Mammary epithelial cell (primary cell): ENCODE measurements at regions of chr16 and their contacts with region 1.

Region 1: GRCh38 chr16:4882633-4883285 is 35.5 kb downstream of the UBN1 start:
- DNase-seq: peak; percentile 93
- H3K4me3 ChIP-seq: no peak overlapping the region
- H3K27ac ChIP-seq: no peak overlapping the region
- H3K4me1 ChIP-seq: peaks cover 14% of the 10 kb centered on the region
- H3K27me3 ChIP-seq: no peaks in the 10 kb centered on the region
- CTCF ChIP-seq: no peak

Region 2: DNA sequence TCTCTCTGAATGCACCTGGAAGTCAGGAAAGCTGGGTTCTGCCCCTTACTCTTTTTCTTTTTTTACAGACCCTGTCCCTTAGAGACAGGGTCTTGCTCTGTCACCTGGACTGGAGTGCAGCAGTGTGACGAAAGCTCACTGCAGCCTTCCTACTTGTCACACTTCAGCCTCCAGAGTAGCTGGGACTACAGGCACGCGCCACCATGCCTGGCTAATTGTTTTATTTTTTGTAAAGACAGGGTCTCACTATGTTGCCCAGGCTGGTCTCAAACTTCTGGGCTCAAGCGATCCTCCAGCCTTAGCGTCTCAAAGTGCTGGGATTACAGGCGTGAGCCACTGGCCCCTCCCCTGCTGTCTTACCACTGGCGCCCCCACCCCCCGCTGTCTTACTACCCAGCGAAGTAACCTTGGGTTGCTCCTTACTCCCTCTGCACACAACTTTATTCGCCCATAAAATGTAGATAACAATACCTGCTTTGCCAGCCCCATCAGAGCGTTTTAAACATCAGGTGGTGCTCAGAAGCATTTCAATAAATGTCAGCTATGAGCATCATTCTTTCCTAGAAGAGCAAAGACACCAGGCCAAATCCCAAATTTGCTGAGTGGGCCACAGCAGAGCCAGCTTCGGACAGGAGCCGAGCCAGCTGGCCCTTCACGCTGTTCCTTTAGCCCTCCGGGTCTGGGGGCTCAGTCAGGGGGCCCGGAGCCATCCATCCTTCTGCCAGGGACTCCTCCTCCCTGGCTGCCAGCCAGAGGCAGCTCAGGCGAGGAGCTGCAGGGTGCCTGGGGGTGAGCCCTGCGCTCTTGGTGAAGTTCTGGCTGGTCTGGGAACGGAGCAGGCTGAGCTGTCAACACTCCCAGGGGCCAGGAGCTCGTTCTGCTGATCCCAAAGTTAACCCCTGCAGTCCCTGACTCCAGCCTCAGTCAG is 665.3 kb before region 1 on chr16:
- CTCF ChIA-PET with region 1: no interaction called
- dilution Hi-C with region 1: no loop called
- in situ Hi-C with region 1: no loop called
- intact Hi-C with region 1: no loop called
- DNase-seq: no peak
- H3K4me3 ChIP-seq: no peak overlapping the region
- H3K27ac ChIP-seq: no peak overlapping the region
- H3K4me1 ChIP-seq: peaks cover 22% of the 10 kb centered on the region
- H3K27me3 ChIP-seq: no peaks in the 10 kb centered on the region
- CTCF ChIP-seq: no peak

Region 3: GRCh38 chr16:4574919-4575705 is 307.6 kb before region 1 on chr16:
- CTCF ChIA-PET with region 1: no interaction called
- dilution Hi-C with region 1: no loop called
- in situ Hi-C with region 1: no loop called
- intact Hi-C with region 1: no loop called
- DNase-seq: no peak
- H3K4me3 ChIP-seq: no peak overlapping the region
- H3K27ac ChIP-seq: no peak overlapping the region
- H3K4me1 ChIP-seq: no peaks in the 10 kb centered on the region
- H3K27me3 ChIP-seq: no peaks in the 10 kb centered on the region
- CTCF ChIP-seq: no peak

Region 4: DNA sequence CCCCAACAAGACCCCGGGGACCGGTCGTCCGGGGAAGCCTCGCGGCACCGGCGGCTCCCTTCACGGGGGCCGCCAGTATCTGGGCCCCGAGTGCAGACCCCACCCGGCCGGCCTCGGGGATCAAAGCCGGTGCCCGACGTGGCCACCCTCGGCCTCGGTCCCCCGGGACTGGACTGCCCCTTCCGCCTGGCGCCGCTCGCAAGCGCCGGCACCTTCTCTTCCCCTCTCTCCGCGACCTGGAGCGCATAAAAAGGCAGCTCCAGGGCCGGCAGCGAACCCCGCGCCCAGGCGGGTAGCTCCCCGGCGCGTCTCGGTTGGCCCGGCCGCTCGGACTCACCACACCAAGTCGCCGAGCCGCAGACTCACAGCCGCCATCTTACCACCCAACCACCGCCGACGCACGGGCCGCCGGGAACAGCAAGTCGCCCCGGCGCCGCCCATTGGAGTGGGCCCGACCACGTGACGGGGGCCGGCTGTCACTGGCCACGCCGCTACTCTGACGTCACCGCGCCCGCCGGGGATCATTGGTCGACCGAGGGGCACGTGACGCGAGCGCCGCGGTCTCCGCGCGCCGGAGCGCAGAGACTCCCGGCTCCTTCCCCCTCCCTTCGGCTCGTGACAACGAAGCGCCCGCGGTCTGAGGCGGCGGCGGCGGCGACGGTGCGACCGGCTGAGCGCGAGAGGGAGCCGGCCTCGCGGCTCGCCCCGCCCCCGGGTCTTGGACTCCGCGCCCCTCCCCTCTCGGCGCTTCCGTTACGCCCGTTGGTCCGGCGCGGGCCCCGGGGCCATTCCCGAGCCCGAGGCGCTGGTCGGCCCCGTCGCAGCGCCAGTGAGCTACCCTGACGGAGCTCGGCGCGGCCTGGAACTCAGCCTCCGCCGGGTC is 35.6 kb before region 1 on chr16 and contains the starts of genes GLYR1 and UBN1:
- CTCF ChIA-PET with region 1: no interaction called
- dilution Hi-C with region 1: no loop called
- in situ Hi-C with region 1: no loop called
- intact Hi-C with region 1: loop called (anchors 2 kb)
- DNase-seq: peak; percentile 97
- H3K4me3 ChIP-seq: peak within 1 kb of the TSS; percentile 65 to 93 (median 89)
- H3K27ac ChIP-seq: peak within 1 kb of the TSS; percentile 83
- H3K4me1 ChIP-seq: peaks cover 34% of the 10 kb centered on the region
- H3K27me3 ChIP-seq: no peaks in the 10 kb centered on the region
- CTCF ChIP-seq: peak in 1 of 2 donors; percentile 1
- total RNA-seq, gene GLYR1: 38.0 to 67.7 TPM
- total RNA-seq, gene UBN1: 23.7 to 37.2 TPM

Region 5: GRCh38 chr16:4924593-4925378 is 42.0 kb after region 1 on chr16:
- CTCF ChIA-PET with region 1: no interaction called
- dilution Hi-C with region 1: no loop called
- in situ Hi-C with region 1: no loop called
- intact Hi-C with region 1: loop called (anchors 1 kb)
- DNase-seq: peak; percentile 56
- H3K4me3 ChIP-seq: no peak overlapping the region
- H3K27ac ChIP-seq: peak overlapping the region; percentile 32
- H3K4me1 ChIP-seq: peaks cover 44% of the 10 kb centered on the region
- H3K27me3 ChIP-seq: no peaks in the 10 kb centered on the region
- CTCF ChIP-seq: no peak

Region 6: DNA sequence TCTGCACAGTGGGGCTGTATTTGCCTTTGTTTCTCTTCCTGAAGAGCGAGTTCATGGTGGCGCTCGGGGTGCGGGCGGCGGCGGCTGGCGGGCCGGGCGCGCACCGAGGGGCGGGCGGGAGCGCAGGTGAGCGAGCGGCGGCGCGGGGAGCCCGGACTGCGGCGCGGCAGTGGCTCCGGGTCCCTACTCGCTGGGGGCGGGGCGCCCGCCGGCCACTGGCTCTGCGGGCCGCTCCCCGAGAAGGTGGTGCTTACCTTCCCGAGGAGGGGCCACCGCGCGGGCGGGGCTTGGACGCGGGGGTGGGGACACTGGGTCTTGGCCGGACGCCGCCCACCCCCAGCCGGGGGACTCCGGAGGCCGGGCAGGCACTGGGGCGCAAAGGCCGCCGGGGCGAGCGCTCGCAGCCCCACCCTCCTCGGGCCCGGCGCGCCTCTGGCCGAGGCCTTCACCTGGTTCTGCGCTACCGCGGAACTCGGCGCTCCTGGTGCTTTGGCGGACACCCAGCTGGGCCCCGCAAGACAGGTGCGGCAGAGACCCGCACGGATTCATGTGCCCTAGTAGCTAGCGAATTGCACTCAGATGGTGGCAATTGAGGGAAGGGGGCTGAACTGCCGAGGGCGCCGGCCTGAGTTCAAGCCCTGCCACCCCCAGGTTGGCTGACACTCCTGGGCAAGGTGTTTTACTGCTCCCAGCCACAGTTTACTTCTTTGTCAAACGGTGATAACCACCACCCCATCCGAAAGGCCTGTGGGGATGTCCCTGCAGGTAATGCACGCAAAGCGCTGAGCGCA is 54.4 kb after region 1 on chr16 and contains the start of gene PPL:
- CTCF ChIA-PET with region 1: no interaction called
- dilution Hi-C with region 1: no loop called
- in situ Hi-C with region 1: no loop called
- intact Hi-C with region 1: loop called (anchors 2 kb)
- DNase-seq: peak; percentile 78
- H3K4me3 ChIP-seq: peak within 1 kb of the TSS; percentile 94 to 98 (median 95)
- H3K27ac ChIP-seq: peak within 1 kb of the TSS; percentile 61
- H3K4me1 ChIP-seq: peaks cover 27% of the 10 kb centered on the region
- H3K27me3 ChIP-seq: no peaks in the 10 kb centered on the region
- CTCF ChIP-seq: no peak
- total RNA-seq, gene PPL: 58.1 to 73.2 TPM

Region 7: GRCh38 chr16:4944333-4945281 is 61.8 kb after region 1 on chr16:
- CTCF ChIA-PET with region 1: no interaction called
- dilution Hi-C with region 1: no loop called
- in situ Hi-C with region 1: no loop called
- intact Hi-C with region 1: loop called (anchors 1 kb)
- DNase-seq: peak; percentile 95
- H3K4me3 ChIP-seq: no peak overlapping the region
- H3K27ac ChIP-seq: peak overlapping the region; percentile 81
- H3K4me1 ChIP-seq: peaks cover 38% of the 10 kb centered on the region
- H3K27me3 ChIP-seq: no peaks in the 10 kb centered on the region
- CTCF ChIP-seq: no peak

Region 8: GRCh38 chr16:4962716-4963115 is 80.0 kb after region 1 on chr16:
- CTCF ChIA-PET with region 1: no interaction called
- dilution Hi-C with region 1: no loop called
- in situ Hi-C with region 1: no loop called
- intact Hi-C with region 1: no loop called
- DNase-seq: no peak
- H3K4me3 ChIP-seq: no peak overlapping the region
- H3K27ac ChIP-seq: no peak overlapping the region
- H3K4me1 ChIP-seq: peaks cover 5% of the 10 kb centered on the region
- H3K27me3 ChIP-seq: no peaks in the 10 kb centered on the region
- CTCF ChIP-seq: no peak